Heart left ventricle (tissue), 16 donors: ENCODE measurements at regions of chr13 and their contacts with region 1.

Region 1: DNA sequence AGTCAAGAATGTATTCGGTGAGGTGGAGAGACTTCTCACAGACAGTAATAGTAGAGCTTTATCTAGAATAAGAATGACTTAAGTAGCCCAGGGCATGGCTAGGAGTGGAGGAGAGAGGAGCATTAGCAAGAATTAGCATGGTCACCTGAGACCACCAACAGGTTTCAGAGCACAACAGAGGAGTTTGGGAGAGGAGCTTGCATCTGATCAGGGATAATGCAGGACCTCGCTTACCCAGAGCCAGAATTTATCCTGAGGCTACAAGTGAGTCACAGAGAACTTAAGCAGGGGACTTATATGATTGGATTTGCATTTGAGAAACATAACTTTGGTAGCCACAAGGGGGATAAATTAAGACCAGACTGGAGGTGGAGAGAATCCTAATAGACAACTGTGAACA is 102.1 kb upstream of the FNDC3A start:
- DNase-seq: no peak
- ATAC-seq: peak in 3 of 4 donors; percentile 14 to 44 (median 27)
- H3K4me3 ChIP-seq: no peak overlapping the region
- H3K27ac ChIP-seq: peak overlapping the region in 6 of 12 donors; percentile 19 to 75 (median 40)
- H3K4me1 ChIP-seq: peaks cover 0 to 18% (median 7%) of the 10 kb centered on the region in 12 donors
- H3K27me3 ChIP-seq: peaks cover 0 to 5% (median 0%) of the 10 kb centered on the region in 9 donors
- CTCF ChIP-seq: peak in 1 of 12 donors; percentile 11
- POLR2A ChIP-seq: no peak

Region 2: DNA sequence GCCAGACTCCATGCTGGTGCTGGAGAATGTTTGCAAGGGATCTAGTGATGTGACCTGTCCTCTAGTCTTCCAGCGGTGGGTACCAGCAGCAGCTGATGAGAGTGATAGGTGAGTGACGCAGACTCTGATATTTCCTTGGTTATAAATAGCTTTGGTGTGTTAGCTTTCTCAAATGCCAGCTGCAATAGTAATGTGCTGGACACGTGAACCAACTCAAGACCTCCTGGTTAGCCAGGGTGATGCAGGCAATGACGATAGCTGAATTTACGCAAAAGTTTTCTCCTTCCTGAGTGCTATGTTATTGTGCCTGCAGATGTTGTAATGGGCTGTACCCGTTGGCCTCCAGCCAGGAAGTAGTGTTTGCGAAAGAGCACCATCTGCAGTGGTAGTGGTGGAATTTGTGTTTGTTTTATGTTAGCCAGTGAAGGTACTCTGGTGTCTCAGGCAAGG is 90.4 kb before region 1 on chr13:
- intact Hi-C with region 1: loop called in 1 of 10 experiments (anchors 5 kb)
- DNase-seq: peak; percentile 61 to 92 (median 78)
- ATAC-seq: peak; percentile 86 to 94 (median 92)
- H3K4me3 ChIP-seq: no peak overlapping the region
- H3K27ac ChIP-seq: peak overlapping the region in 9 of 12 donors; percentile 8 to 74 (median 45)
- H3K4me1 ChIP-seq: peaks cover 0 to 15% (median 2%) of the 10 kb centered on the region in 12 donors
- H3K27me3 ChIP-seq: no peaks in the 10 kb centered on the region
- CTCF ChIP-seq: no peak
- POLR2A ChIP-seq: no peak

Region 3: GRCh38 chr13:48818495-48819031 is 55.0 kb before region 1 on chr13:
- intact Hi-C with region 1: no loop called
- DNase-seq: no peak
- ATAC-seq: peak in 2 of 4 donors; percentile 62 to 85
- H3K4me3 ChIP-seq: no peak overlapping the region
- H3K27ac ChIP-seq: peak overlapping the region in 1 of 12 donors; percentile 28
- H3K4me1 ChIP-seq: peaks cover 0 to 12% (median 0%) of the 10 kb centered on the region in 12 donors
- H3K27me3 ChIP-seq: no peaks in the 10 kb centered on the region
- CTCF ChIP-seq: no peak
- POLR2A ChIP-seq: no peak